ENCODE measurements at regions of chr1 and their contacts with region 1.

Region 1: GRCh38 chr1:225817611-225818061 is 7.7 kb downstream of the EPHX1 start:
- DNase-seq: peak; percentile 85
- ATAC-seq: peak; percentile 42

Region 2: DNA sequence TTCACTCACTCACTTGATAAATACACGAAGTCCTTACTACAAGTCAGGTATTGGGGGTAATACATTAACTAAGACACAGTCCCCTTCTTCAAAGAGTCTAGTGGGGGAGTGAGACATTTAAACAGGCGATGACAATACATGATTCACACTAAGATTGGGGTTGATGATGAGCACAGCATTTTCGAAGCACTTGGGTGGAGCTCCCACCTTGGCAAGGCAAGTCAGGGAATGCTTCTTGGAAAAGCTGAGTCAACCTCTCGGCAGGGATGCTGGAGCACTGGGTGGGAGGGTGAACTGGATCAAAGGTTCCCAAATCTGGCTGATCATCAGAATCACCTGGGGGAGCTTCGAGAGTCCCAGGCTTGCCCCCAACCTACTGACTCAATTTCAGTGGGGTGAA is 106.8 kb before region 1 on chr1:
- intact Hi-C with region 1: no loop called
- DNase-seq: no peak
- ATAC-seq: no peak

Region 3: DNA sequence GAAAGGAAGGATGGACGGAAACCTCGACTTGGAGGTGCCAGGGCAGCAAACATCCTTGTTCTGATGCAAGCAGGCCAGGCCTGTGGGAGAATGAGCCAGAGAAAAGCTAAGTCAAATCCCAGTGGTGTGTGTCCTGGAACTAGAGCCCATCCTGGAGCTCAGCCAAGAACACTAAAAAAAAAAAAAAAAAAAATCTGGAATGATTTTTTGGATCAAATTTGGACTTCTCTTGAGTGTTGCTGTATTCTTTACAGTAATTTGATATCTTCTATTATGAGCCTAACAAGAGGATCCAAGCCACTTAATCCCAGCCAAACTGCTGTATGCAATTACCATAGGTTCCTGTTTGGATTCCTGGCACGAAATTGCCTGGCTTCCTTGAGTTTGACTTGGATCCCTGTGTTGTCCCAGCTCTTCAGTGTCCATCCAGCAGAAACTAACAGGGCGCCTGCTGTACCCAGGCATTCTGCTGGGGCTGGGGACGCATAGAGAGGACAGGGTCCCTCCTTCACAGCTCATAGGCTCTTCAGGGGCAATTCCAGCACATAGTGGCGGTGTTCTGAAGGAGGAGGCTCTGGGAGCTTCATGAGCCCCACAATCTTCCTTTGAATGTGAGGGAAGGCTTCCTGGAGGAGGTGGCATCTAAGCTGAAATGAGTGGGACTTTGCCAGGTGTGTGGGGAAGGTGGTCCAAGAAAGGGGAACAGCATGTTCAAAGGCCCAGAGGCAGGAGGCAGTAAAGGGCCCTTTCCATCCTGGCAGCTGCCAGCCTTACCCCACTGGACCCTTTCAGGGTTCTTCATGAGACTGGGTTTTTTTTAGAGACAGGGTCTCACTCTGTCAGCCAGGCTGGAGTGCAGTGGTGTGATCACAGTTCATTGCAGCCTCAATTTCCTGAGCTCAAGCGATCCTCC is 17.0 kb after region 1 on chr1:
- intact Hi-C with region 1: loop called (anchors 1 kb)
- DNase-seq: no peak
- ATAC-seq: peak; percentile 92

Region 4: DNA sequence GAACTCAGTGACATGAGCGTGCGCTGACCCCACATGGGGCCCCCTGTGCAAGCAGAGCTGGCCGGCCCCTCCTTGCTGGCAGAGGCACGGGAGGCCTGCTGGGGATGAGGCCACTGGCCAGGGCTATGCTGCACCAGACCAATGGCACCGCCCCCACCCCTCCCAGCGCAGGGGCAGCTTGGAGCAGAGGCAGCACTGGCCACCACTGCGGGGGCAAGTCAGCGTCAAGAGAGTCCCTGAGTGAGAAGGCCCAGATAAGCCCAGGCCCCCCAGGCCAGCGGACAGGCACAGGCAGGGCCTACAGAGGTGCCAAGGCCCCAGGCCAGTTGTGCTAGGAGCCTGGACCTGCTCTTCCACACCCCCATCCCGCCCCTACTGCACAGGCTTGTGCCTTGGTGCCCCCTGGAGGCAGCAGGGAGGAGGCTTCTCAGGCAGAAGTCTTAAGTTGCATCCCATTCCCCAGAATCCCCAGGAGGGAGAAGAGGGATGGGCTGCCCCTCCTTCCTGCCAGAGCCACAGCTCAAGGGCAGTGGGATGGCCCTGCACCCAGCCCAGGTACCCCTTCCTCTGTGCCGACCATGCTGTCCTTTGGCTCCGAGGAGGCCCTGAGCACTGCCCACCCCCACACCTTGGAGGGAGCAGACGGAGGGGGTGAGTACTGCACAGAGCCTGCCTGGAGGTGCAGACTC is 28.1 kb after region 1 on chr1:
- intact Hi-C with region 1: no loop called
- DNase-seq: peak; percentile 86
- ATAC-seq: peak; percentile 83

Region 5: GRCh38 chr1:225908773-225909172 is 91.1 kb after region 1 on chr1:
- intact Hi-C with region 1: no loop called
- DNase-seq: no peak
- ATAC-seq: no peak

Measured in Right ventricle myocardium inferior (tissue), 1 donor.